Dendritic cell treated with granulocyte-macrophage colony-stimulating factor and Interleukin-4, amounts not matched to agents 40 ng/mL and 50 ng/mL, for 4 days (primary cell): ENCODE measurements at regions of chr7 and their contacts with region 1.

Region 1: DNA sequence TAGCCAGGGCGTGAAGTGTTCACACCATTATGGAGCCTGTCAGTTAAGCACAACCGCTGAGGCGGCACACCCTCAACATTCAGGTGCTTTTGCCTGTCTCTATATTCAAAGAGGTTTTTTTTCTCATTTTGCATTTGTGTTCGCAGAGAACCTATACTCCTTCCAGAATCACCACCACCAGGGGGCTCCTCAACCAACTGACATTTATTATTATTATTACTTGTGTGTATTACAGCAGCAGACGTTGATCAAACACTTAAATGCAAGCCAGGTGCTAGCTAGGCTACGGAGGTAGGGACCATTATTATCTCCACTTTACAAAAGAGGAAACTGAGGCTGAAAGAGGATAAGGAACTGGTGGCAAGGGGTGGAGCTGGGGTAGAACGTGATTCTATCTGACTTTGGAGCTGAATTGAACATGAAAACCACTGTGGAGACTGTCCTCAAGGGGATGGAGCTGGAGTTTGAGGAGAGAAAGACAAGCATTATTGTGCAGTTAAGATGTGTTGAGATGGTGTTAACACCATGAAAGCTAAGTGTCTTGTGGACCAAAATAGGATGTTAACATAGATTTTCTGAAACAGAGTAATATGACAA is 133.8 kb upstream of the PLXNA4 start:
- H3K4me3 Mint-ChIP-seq: no peak overlapping the region
- H3K27ac Mint-ChIP-seq: no peak overlapping the region
- H3K4me1 Mint-ChIP-seq: peaks cover 4% of the 10 kb centered on the region
- H3K27me3 Mint-ChIP-seq: no peaks in the 10 kb centered on the region

Region 2: DNA sequence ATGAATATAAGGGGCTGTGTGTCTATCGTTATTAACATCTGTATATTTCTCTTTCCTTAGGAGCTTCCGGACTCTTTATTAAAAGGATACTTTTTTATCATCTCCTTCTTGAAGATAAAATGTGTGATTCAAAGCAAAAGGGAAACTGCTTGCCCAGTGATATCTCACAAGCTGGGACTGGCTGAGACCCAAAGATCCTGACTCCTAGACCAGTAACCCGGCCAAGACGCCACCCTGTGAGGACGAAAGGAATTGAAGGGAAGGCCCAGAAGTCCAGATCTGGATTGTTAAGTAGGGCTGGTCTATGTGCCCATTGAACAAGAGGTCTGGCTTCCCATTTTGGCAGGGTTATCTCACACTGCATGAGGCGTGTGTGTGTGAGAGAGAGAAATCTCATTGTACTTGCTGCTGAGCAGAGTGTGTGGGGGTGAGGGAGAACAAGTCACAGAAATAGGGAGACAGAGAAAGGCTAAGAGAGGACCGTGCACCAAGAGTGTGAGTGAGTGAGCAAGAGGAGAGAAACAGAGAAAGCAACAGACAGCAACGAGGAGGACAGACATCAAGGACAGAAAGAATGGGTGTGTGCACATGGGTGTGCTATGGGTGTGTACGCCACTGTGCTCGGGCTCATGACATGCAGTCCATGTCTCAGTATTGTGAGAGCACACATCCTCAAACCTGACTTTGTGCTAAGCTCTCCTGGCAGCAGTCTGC is 209.2 kb before region 1 on chr7:
- intact Hi-C with region 1: no loop called
- H3K4me3 Mint-ChIP-seq: no peak overlapping the region
- H3K27ac Mint-ChIP-seq: no peak overlapping the region
- H3K4me1 Mint-ChIP-seq: no peaks in the 10 kb centered on the region
- H3K27me3 Mint-ChIP-seq: peaks cover 17% of the 10 kb centered on the region

Region 3: DNA sequence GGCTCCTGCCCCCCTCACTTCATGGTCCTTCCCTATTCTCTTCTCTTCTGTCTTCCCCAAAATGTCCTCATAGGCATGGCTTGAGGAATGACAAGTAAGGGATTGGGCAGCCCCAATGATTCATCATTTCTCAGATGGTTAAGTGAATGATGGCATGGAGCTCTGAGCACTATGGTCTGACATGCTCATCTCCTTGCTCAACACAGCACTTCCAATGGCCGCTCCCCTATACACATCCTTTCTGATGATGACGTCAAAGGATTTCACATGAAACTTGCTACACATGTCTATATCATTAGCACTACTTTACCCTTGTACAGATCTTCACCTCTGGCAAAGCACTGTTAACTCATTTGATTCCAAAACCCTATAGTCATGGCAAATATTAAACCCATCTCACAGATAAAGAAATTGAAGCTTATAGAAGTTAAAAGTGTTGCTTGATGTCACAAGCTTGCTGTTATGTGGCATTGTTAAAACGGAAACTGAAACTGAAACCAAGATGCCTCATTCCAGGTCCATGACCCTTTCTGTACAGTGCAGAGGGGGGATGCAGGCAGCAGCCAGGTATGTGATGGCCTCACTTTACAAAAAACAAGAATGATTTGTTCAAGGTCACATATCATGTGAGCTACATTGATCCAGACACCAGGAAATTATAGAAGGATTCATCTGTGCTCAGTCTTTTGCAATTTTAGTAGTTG is 43.8 kb before region 1 on chr7:
- intact Hi-C with region 1: no loop called
- H3K4me3 Mint-ChIP-seq: no peak overlapping the region
- H3K27ac Mint-ChIP-seq: no peak overlapping the region
- H3K4me1 Mint-ChIP-seq: no peaks in the 10 kb centered on the region
- H3K27me3 Mint-ChIP-seq: no peaks in the 10 kb centered on the region

Region 4: DNA sequence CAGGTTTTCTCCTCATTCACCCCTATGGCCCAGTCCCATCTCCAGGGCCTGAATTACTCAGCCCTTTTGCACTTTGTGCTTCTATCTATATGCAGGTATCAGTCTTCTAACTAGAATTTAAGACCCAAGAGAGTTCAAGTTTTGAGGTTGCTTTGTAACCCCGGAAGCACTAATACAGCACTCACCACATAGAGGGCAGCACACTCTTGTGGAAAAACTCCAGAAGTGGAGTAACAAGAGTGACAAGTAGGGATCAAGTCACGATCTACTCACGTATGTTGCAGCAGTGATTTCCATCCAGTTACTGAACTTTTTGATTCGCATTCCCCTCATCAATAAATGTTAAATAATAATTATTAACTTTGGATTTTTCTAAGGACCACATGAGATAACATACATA is 220.8 kb after region 1 on chr7:
- intact Hi-C with region 1: no loop called
- H3K4me3 Mint-ChIP-seq: no peak overlapping the region
- H3K27ac Mint-ChIP-seq: peak overlapping the region; percentile 44
- H3K4me1 Mint-ChIP-seq: peaks cover 48% of the 10 kb centered on the region
- H3K27me3 Mint-ChIP-seq: no peaks in the 10 kb centered on the region

Region 5: GRCh38 chr7:133230591-133231194 is 520.6 kb after region 1 on chr7:
- intact Hi-C with region 1: loop called (anchors 5 kb)
- H3K4me3 Mint-ChIP-seq: no peak overlapping the region
- H3K27ac Mint-ChIP-seq: no peak overlapping the region
- H3K4me1 Mint-ChIP-seq: no peaks in the 10 kb centered on the region
- H3K27me3 Mint-ChIP-seq: no peaks in the 10 kb centered on the region

Region 6: DNA sequence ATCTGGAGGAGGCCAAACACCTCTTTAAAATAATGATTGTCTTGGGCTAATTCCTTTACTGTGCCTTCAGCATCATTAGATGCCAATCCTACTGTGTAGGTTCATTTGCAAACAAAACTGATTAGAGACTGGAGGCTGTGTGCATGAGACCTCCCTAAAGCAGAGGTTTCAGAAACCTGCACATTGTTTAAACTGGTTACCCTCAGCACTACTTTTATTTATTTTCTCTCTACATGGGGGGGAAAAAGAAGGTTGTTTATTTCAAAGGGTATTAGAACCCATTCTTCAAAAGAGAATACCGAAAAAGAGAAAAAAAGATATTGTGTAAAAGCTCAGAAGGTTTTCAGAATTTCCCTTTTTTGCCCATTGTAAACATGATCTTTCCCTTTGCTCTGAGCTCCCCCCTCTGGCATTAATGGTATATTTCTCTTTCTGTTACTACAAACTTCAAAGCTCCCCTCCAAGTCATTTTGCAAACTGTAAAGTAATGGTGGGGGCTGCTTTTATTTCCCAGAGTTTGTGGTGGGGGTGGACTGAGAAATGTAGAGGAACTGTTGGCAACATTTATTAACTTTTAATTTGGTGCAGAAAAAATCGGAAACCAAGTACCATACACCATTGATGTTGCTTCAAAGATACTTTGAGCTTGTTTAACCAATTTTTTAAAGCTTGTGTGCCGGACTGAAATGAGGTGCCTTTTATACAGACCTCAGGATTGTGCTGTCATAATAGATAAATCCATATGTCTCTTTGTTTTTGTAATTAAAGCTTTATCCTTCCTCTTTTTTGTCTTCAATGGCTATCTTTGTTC is 724.2 kb after region 1 on chr7:
- intact Hi-C with region 1: loop called (anchors 5 kb)
- H3K4me3 Mint-ChIP-seq: no peak overlapping the region
- H3K27ac Mint-ChIP-seq: no peak overlapping the region
- H3K4me1 Mint-ChIP-seq: peaks cover 7% of the 10 kb centered on the region
- H3K27me3 Mint-ChIP-seq: no peaks in the 10 kb centered on the region